Activated CD4-positive, alpha-beta T cell treated with anti-CD3 and anti-CD28 coated beads for 36 hours (primary cell): ENCODE measurements at regions of chr9 and their contacts with region 1.

Region 1: DNA sequence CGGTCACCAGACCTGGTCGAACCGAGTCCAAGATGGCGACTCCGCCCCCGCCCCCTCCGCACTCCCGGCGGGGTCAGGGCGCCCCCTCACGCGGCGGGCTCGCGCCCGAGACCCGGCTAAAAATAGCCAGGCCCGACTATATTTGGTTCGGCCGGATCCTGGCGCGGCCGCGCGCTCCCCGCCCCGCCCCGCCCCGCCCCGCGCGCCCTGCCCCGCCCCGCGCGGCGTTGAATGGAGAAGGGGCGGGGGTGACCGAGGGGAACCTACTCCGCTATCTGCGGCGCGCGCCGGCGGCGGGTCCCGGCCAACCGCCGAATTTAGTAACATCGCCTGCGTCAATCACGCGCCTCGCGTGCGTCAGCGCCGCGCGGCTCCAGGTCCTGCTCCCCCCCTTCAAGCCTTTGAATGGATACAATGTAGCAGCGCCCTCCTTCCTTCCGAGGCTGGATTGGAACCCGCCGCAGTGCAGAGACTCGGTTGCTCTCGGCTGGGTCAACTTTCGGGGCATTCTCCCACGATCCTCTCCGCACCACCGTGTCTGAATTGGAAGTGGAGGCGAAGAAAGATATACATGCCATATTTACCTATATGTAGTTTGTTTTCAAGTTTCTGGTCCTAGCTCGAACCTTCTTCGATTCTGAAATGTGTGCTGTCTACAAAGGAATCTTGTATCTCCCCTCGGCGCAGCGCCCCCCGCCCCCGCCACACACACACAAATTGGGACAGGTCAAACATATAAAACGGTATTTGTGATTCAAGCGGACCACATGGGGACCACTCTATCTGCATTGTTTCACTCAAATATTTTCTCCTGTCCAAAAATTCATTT is 1.6 kb upstream of the NR4A3 start:
- DNase-seq: peak; percentile 95
- ATAC-seq: peak; percentile 39
- H3K4me3 Mint-ChIP-seq: peak overlapping the region; percentile 88
- H3K27ac Mint-ChIP-seq: peak overlapping the region; percentile 94
- H3K4me1 Mint-ChIP-seq: peaks cover 42% of the 10 kb centered on the region
- H3K27me3 Mint-ChIP-seq: peaks cover 4% of the 10 kb centered on the region

Region 2: DNA sequence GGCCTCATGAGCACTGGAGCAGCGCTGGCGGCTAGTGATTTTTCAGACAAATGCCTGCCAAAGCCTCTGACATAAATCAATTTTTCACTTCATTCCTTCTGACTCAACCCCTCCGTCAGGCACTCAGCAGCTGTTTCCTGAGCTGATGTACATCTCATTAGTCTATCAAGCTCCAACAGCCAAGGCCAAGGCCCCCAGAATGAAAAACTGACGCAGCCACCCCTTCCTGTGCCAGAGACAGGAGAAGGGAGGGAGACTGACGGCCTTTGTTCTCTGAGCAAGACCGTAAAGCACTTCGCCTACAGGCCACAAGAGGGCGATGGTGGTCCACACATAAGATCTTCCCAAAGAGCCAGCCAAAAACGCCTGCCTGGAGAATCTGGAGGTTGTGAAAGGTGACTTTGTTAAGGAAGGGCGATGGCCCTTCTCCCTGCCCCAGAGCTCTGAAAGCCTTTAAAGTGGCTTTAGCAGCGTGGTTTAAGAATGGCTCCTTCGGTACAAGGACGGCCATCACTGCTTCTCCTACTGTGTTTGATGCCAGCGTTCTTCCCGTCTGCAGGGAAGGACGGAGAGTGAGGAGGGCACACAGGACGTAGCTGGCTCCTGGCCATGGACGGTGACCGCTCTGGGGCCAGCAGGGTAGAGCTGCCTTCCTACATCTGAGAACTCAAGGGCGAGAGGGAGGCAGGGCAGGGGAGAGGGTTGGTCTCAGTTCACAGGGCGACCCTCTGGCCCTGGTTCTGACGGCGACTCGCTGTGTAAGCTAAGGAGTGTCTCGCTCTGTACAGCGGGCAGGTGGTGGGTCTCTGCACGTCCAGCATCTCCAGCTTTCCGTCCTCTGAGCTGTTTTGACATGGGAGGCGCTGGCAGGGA is 635.4 kb before region 1 on chr9:
- CTCF ChIA-PET with region 1: interaction called, 3 read pairs
- POLR2A ChIA-PET with region 1: no interaction called
- intact Hi-C with region 1: loop called (anchors 1 to 5 kb)
- DNase-seq: peak; percentile 88
- ATAC-seq: peak; percentile 89
- H3K4me3 Mint-ChIP-seq: no peak overlapping the region
- H3K27ac Mint-ChIP-seq: peak overlapping the region; percentile 33
- H3K4me1 Mint-ChIP-seq: peaks cover 42% of the 10 kb centered on the region
- H3K27me3 Mint-ChIP-seq: peaks cover 6% of the 10 kb centered on the region

Region 3: GRCh38 chr9:99807276-99807852 is 12.7 kb before region 1 on chr9:
- CTCF ChIA-PET with region 1: interaction called, 16 read pairs
- POLR2A ChIA-PET with region 1: no interaction called
- intact Hi-C with region 1: loop called (anchors 1 kb)
- DNase-seq: peak; percentile 76
- ATAC-seq: no peak
- H3K4me3 Mint-ChIP-seq: no peak overlapping the region
- H3K27ac Mint-ChIP-seq: no peak overlapping the region
- H3K4me1 Mint-ChIP-seq: peaks cover 32% of the 10 kb centered on the region
- H3K27me3 Mint-ChIP-seq: peaks cover 4% of the 10 kb centered on the region

Region 4: GRCh38 chr9:100011062-100011681 is 191.1 kb after region 1 on chr9:
- CTCF ChIA-PET with region 1: interaction called, 16 read pairs
- POLR2A ChIA-PET with region 1: no interaction called
- intact Hi-C with region 1: loop called (anchors 1 to 5 kb)
- DNase-seq: peak; percentile 64
- ATAC-seq: peak; percentile 53
- H3K4me3 Mint-ChIP-seq: no peak overlapping the region
- H3K27ac Mint-ChIP-seq: no peak overlapping the region
- H3K4me1 Mint-ChIP-seq: no peaks in the 10 kb centered on the region
- H3K27me3 Mint-ChIP-seq: no peaks in the 10 kb centered on the region

Region 5: GRCh38 chr9:100352727-100353505 is 532.8 kb after region 1 on chr9 and contains the start of gene TEX10:
- CTCF ChIA-PET with region 1: no interaction called
- POLR2A ChIA-PET with region 1: no interaction called
- intact Hi-C with region 1: loop called in 1 of 2 experiments (anchors 2 kb)
- DNase-seq: peak; percentile 93
- ATAC-seq: peak; percentile 93
- H3K4me3 Mint-ChIP-seq: peak within 1 kb of the TSS; percentile 95
- H3K27ac Mint-ChIP-seq: peak within 1 kb of the TSS; percentile 91
- H3K4me1 Mint-ChIP-seq: peaks cover 41% of the 10 kb centered on the region
- H3K27me3 Mint-ChIP-seq: no peaks in the 10 kb centered on the region
- total RNA-seq, gene TEX10: 24.8 to 27.5 TPM

Region 6: DNA sequence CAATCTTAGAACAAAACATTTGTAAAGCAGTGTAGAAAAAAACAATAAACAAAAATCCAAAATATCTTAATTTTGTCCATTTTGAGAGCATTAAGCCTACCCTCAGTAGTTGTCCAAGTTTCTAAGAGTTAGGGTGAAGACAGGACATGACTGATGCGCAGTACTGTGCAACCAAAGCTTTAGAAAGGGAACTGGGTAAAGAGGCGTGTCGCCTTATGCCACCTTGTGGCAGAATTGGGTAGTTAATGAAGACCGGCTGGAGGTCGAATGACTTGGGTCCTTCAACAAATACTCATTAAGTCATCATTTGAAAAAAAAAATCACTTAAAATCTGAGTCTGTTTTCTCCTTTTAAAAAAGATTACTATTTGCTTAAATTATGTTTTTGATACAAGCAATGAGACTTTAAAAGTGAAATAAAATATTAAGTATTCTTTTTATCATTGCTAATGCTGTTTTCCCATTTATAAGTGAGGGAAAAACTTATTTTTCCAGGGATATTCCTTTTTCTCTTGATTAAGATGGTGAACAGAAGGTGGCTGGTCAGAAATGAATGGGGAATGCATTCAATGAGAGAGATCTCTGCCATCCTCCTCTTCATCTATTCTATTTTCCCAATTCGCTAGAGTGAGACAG is 1710.1 kb after region 1 on chr9:
- CTCF ChIA-PET with region 1: no interaction called
- POLR2A ChIA-PET with region 1: no interaction called
- intact Hi-C with region 1: loop called in 1 of 2 experiments (anchors 10 kb)
- DNase-seq: peak; percentile 78
- ATAC-seq: peak; percentile 15
- H3K4me3 Mint-ChIP-seq: no peak overlapping the region
- H3K27ac Mint-ChIP-seq: no peak overlapping the region
- H3K4me1 Mint-ChIP-seq: peaks cover 20% of the 10 kb centered on the region
- H3K27me3 Mint-ChIP-seq: peaks cover 6% of the 10 kb centered on the region